Calu3 (cell line): ENCODE measurements at regions of chr5 and their contacts with region 1.

Region 1: DNA sequence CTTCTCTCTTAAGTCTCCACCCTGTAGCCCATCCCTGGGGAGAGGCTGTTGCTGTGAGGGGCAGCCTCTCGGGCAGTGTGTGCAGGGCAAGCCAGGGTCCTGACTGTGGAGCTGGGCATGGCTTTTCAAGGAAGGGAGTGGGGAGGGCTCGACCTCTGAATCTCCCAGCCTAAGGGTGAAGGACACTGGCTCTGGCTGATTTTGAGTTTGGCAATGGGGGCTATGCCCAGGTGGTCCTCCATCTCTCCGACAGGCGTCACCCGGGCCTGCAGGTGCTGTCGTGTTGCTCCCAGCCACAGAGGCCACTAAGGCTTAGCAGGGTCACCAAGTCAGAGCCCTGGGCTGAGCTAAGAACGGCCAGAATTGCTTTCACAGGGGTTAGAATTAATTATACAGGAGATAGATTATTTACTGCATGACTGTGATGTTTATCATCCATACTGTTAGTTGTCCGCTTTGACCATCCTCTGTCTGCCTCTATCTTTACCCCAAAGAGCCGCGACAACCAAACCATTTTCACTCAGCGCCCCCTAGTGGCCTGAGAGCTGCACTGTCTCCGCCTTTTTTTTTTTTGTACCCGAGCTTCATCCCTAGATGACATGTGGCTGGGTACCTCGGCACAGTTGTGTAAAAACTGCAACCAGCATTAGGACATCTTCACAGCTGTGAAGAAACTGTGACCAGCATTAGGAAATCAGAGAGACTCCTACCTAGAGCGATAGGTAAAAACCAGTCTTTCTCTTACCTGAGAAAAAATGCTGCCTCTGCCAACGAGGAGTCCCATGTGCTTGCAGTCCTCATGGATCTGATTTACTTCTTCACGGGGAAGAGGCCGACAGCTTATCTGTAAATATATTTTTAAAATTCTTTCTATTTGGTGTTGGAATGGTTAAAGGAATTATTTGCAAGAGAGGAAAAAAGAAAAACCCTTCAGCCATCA is 44.5 kb downstream of the AGXT2 start:
- DNase-seq: peak; percentile 78
- H3K4me3 Mint-ChIP-seq: no peak overlapping the region
- H3K27ac Mint-ChIP-seq: no peak overlapping the region
- H3K4me1 Mint-ChIP-seq: peaks cover 8% of the 10 kb centered on the region
- H3K27me3 Mint-ChIP-seq: peaks cover 61% of the 10 kb centered on the region
- CTCF ChIP-seq: peak; percentile 74

Region 2: GRCh38 chr5:34474573-34475021 is 528.7 kb before region 1 on chr5:
- CTCF ChIA-PET with region 1: interaction called, 4 read pairs
- intact Hi-C with region 1: loop called (anchors 2 kb)
- DNase-seq: peak; percentile 29
- H3K4me3 Mint-ChIP-seq: no peak overlapping the region
- H3K27ac Mint-ChIP-seq: no peak overlapping the region
- H3K4me1 Mint-ChIP-seq: peaks cover 12% of the 10 kb centered on the region
- H3K27me3 Mint-ChIP-seq: no peaks in the 10 kb centered on the region
- CTCF ChIP-seq: peak; percentile 68

Region 3: DNA sequence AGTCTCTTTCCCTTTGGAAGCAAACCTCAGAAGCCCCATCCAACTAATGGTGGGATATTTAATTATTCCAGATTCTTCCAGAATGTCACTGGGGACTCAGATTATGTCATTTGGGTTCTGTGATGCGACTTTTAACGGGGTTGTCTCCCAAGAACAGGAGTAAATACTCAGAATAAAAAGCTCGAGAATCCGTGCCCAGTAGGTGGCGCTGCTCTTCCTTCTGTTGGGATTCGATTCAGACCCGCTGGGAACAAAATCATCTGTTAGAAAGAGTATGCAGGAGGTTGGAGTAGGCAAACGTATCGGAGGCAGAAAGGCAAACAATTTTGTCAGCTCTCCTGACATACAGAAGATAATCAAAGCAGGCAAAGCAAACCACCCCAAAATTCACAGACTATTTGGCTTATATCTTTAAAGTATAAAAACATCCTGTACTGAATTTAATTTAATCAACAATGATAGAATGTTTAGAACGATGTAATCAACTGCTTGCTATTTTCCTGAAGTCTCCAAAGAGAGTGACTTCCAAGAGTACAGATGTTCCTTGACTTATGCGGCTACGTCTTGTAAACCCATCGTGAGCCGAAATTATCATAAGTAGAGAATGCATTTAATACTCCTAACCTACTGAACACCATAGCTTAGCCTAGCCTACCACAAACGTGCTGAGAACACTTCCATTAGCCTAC is 517.0 kb before region 1 on chr5:
- CTCF ChIA-PET with region 1: interaction called, 4 read pairs
- intact Hi-C with region 1: loop called (anchors 5 kb)
- DNase-seq: peak; percentile 76
- H3K4me3 Mint-ChIP-seq: no peak overlapping the region
- H3K27ac Mint-ChIP-seq: no peak overlapping the region
- H3K4me1 Mint-ChIP-seq: peaks cover 32% of the 10 kb centered on the region
- H3K27me3 Mint-ChIP-seq: no peaks in the 10 kb centered on the region
- CTCF ChIP-seq: peak; percentile 70

Region 4: DNA sequence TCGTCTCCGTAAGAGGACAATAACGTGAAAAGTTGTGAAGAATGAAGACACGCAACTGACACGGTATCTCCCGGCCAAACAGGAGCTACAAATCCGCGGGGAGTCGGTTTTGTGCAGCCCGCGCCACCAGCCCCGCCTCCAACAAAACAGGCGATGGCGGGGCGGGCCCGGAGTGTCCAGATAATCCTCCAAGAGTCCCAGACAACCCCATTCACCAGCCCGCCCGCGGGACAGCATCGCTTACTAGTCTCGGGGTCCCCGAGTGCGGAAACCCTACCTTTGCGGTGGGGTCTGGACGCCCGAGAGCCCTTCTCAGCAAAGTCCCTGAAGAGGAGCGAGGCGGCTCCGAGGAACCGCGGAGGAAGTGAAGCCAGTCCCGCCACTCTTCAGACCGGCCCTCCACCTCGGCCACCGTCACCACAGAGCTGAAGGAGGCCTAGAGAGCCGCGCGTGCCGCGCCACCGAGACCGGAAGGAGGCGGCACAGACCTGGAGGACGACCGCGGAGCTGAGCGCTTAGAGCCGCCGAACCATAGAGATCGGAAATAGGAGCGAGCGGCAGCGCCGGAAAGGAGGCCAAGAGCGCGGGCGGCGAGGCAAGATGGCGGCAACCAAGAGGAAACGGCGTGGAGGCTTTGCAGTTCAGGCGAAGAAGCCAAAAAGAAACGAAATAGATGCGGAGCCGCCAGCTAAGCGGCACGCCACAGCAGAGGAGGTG is 88.0 kb before region 1 on chr5 and contains the starts of genes BRIX1 and RAD1:
- CTCF ChIA-PET with region 1: interaction called, 10 read pairs
- intact Hi-C with region 1: no loop called
- DNase-seq: peak; percentile 96
- H3K4me3 Mint-ChIP-seq: no peak within 1 kb of the TSS
- H3K27ac Mint-ChIP-seq: peak within 1 kb of the TSS; percentile 72
- H3K4me1 Mint-ChIP-seq: peaks cover 15% of the 10 kb centered on the region
- H3K27me3 Mint-ChIP-seq: no peaks in the 10 kb centered on the region
- CTCF ChIP-seq: no peak
- total RNA-seq, gene BRIX1: 47.0 and 51.1 TPM in 2 replicates
- total RNA-seq, gene RAD1: 24.2 and 28.7 TPM in 2 replicates

Region 5: GRCh38 chr5:34957857-34958690 is 45.2 kb before region 1 on chr5:
- CTCF ChIA-PET with region 1: interaction called, 20 read pairs
- intact Hi-C with region 1: loop called (anchors 1 kb)
- DNase-seq: peak; percentile 24
- H3K4me3 Mint-ChIP-seq: no peak overlapping the region
- H3K27ac Mint-ChIP-seq: peak overlapping the region; percentile 18
- H3K4me1 Mint-ChIP-seq: no peaks in the 10 kb centered on the region
- H3K27me3 Mint-ChIP-seq: no peaks in the 10 kb centered on the region
- CTCF ChIP-seq: no peak